Activated CD4-positive, alpha-beta memory T cell treated with anti-CD3 and anti-CD28 coated beads, Interleukin-2, amount 10 ng/mL, durations not matched to agents 7 days and 5 days (primary cell): ENCODE measurements at regions of chr10 and their contacts with region 1.

Region 1: DNA sequence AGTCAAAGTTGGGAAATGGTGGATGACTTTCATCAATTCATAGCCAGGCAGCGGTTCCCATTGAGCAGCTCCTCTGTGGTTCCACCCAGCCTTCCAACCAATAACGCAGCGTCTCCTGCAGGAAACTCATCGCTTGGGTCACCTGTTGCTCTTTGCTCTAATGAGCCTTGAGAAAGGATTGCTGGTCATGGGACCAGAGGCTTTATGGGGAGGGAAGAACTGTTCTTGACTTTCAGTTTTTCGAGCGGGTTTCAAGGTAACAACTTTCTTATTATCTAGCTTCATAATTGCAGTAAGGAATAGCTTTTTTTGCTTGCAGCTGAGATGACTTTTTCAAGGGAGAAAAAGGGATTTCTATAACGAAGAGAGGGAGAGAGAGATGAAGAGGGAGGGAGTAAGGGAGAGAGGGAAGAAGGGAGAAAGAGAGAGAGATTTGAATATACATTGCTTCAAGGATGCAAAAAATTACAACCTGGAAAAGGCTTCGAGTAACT is 405 bp upstream of the ENTPD1 start:
- DNase-seq: no peak
- H3K4me3 Mint-ChIP-seq: peak overlapping the region; percentile 76
- H3K27ac Mint-ChIP-seq: peak overlapping the region; percentile 54
- H3K4me1 Mint-ChIP-seq: peaks cover 42% of the 10 kb centered on the region
- H3K27me3 Mint-ChIP-seq: peaks cover 14% of the 10 kb centered on the region

Region 2: GRCh38 chr10:95552679-95553342 is 202.7 kb before region 1 on chr10:
- CTCF ChIA-PET with region 1: no interaction called
- POLR2A ChIA-PET with region 1: no interaction called
- DNase-seq: no peak
- H3K4me3 Mint-ChIP-seq: no peak overlapping the region
- H3K27ac Mint-ChIP-seq: no peak overlapping the region
- H3K4me1 Mint-ChIP-seq: no peaks in the 10 kb centered on the region
- H3K27me3 Mint-ChIP-seq: peaks cover 10% of the 10 kb centered on the region

Region 3: DNA sequence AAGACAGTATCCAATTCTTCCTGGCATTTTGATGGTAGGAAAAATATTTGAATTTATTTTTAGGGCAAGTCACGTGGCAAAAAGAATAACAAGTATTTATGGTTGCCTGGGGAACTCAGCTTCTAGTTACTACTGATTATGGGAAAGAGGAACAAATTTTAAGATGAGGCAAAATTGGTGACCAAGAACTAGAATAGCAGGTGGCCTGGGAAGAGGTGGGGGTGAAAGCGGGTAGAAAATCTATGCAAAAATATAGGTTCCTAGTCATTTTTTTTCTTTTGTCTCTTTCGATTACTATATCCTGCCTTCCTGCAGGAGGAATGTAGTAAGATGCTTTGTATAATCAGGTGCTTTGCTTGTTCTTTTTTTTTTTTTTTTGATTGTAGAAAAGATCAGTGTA is 28.2 kb after region 1 on chr10:
- CTCF ChIA-PET with region 1: interaction called, 3 read pairs
- POLR2A ChIA-PET with region 1: interaction called, 13 read pairs
- DNase-seq: no peak
- H3K4me3 Mint-ChIP-seq: no peak overlapping the region
- H3K27ac Mint-ChIP-seq: no peak overlapping the region
- H3K4me1 Mint-ChIP-seq: peaks cover 60% of the 10 kb centered on the region
- H3K27me3 Mint-ChIP-seq: peaks cover 13% of the 10 kb centered on the region